ENCODE measurements at regions of chr3 and their contacts with region 1.

Region 1: DNA sequence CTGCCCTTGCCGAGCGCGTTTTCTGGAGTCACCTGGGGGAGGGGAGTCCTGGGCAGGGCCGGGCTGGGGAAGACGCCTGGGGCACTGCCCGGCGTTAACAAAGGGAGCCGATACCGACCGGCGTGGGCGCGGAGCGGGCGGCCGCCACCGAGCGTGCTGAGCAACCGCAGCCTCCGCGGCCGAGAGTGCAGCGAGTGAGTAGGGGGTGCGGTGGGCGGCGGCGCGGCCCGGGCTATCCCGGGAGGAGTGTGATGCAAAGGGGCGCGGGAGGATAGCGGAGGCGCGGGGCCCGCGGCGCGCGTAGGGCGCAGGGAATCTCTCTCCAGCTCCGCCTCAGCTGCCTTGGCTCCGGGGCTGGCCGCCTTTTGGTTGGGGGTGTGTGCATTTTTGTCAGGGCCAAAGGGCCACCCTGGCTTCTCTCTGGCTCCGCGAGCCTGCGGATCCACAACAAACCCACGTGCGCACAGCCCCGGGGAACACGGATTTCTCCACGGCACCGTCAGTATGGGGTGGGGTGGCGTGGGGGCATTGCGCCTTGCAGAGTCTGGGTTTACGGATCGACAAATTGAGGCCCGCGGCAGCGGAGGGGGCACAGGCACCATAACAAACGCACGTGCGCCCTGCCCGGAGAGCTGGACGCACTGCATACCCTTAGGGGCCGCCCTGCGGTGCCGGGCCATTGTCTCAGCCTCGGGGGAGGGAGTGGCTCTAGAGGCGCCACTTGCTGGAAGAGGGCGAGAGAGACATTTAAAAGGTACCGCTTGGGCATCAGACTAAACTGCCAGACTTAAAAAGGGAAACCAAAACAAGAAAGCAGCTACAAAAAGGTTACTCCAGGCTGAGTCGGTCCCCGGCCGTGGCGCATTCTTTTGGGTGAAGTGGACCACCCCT is 560 bp downstream of the ST6GAL1 start:
- DNase-seq: peak; percentile 39 to 78 (median 75)
- ATAC-seq: peak; percentile 87
- H3K4me3 ChIP-seq: peak overlapping the region; percentile 79
- H3K4me3 Mint-ChIP-seq: peak overlapping the region; percentile 89 to 100 (median 98)
- H3K27ac ChIP-seq: peak overlapping the region; percentile 74
- H3K27ac Mint-ChIP-seq: peak overlapping the region; percentile 88 to 98 (median 95)
- H3K4me1 ChIP-seq: peaks cover 8 to 20% of the 10 kb centered on the region in 2 donors
- H3K4me1 Mint-ChIP-seq: peaks cover 30 to 47% (median 40%) of the 10 kb centered on the region in 7 donors
- H3K27me3 ChIP-seq: no peaks in the 10 kb centered on the region
- H3K27me3 Mint-ChIP-seq: no peaks in the 10 kb centered on the region

Region 2: GRCh38 chr3:186617038-186617946 is 313.6 kb before region 1 on chr3:
- CTCF ChIA-PET with region 1: interaction called, 3 read pairs
- POLR2A ChIA-PET with region 1: no interaction called
- intact Hi-C with region 1: loop called in 1 of 2 experiments (anchors 5 kb)
- DNase-seq: peak; percentile 67 to 87 (median 83)
- ATAC-seq: peak; percentile 99
- H3K4me3 ChIP-seq: peak overlapping the region; percentile 23
- H3K4me3 Mint-ChIP-seq: peak overlapping the region; percentile 47 to 81 (median 74)
- H3K27ac ChIP-seq: no peak overlapping the region
- H3K27ac Mint-ChIP-seq: peak overlapping the region in 8 of 9 donors; percentile 51 to 81 (median 62)
- H3K4me1 ChIP-seq: peaks cover 5 to 10% of the 10 kb centered on the region in 2 donors
- H3K4me1 Mint-ChIP-seq: peaks cover 14 to 30% (median 21%) of the 10 kb centered on the region in 7 donors
- H3K27me3 ChIP-seq: no peaks in the 10 kb centered on the region
- H3K27me3 Mint-ChIP-seq: peaks cover 14 to 51% (median 26%) of the 10 kb centered on the region in 5 donors

Region 3: DNA sequence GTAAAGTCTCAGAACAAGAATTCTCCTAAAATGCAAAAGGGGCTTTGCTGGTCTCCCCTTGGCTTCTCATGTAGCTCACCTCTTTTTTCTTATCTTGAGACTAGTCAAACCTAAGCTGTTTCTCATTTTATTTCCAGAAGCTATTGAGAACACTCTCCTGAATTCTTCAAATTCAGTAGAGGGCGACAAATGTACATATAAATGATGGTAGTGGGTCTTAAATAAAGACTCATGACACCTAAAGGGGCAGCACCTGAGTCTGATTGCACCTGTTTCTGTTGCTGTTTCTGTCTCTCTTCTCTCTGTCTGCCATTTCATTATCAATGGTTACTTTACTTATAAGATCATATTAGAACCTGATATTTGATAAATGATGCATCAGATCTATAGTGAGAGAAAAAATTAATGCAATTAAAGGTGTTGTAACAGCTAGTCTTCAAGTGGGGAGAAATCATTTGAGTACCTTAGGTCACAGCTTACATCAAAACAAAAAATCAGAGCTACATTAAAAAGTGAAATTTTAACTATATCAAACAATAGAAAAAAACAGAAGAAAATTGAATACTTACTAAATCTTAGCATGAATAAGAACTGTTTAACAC is 81.4 kb before region 1 on chr3:
- CTCF ChIA-PET with region 1: interaction called, 72 read pairs
- POLR2A ChIA-PET with region 1: interaction called, 62 read pairs
- intact Hi-C with region 1: loop called (anchors 1 kb)
- DNase-seq: peak in 7 of 9 donors; percentile 41 to 77 (median 64)
- ATAC-seq: peak; percentile 90
- H3K4me3 ChIP-seq: no peak overlapping the region
- H3K4me3 Mint-ChIP-seq: no peak overlapping the region
- H3K27ac ChIP-seq: no peak overlapping the region
- H3K27ac Mint-ChIP-seq: peak overlapping the region in 4 of 9 donors; percentile 9 to 68 (median 37)
- H3K4me1 ChIP-seq: peaks cover 0 to 7% of the 10 kb centered on the region in 2 donors
- H3K4me1 Mint-ChIP-seq: peaks cover 14 to 30% (median 18%) of the 10 kb centered on the region in 7 donors
- H3K27me3 ChIP-seq: no peaks in the 10 kb centered on the region
- H3K27me3 Mint-ChIP-seq: peaks cover 0 to 20% (median 11%) of the 10 kb centered on the region in 5 donors

Region 4: GRCh38 chr3:186915806-186916796 is 14.8 kb before region 1 on chr3:
- CTCF ChIA-PET with region 1: interaction called, 9 read pairs
- POLR2A ChIA-PET with region 1: interaction called, 74 read pairs
- intact Hi-C with region 1: no loop called
- DNase-seq: no peak
- ATAC-seq: peak; percentile 36
- H3K4me3 ChIP-seq: peak overlapping the region; percentile 9
- H3K4me3 Mint-ChIP-seq: peak overlapping the region in 7 of 10 donors; percentile 4 to 66 (median 41)
- H3K27ac ChIP-seq: no peak overlapping the region
- H3K27ac Mint-ChIP-seq: peak overlapping the region in 6 of 9 donors; percentile 36 to 81 (median 46)
- H3K4me1 ChIP-seq: peaks cover 9 to 24% of the 10 kb centered on the region in 2 donors
- H3K4me1 Mint-ChIP-seq: peaks cover 22 to 68% (median 56%) of the 10 kb centered on the region in 7 donors
- H3K27me3 ChIP-seq: no peaks in the 10 kb centered on the region
- H3K27me3 Mint-ChIP-seq: peaks cover 0 to 3% (median 0%) of the 10 kb centered on the region in 5 donors

Region 5: DNA sequence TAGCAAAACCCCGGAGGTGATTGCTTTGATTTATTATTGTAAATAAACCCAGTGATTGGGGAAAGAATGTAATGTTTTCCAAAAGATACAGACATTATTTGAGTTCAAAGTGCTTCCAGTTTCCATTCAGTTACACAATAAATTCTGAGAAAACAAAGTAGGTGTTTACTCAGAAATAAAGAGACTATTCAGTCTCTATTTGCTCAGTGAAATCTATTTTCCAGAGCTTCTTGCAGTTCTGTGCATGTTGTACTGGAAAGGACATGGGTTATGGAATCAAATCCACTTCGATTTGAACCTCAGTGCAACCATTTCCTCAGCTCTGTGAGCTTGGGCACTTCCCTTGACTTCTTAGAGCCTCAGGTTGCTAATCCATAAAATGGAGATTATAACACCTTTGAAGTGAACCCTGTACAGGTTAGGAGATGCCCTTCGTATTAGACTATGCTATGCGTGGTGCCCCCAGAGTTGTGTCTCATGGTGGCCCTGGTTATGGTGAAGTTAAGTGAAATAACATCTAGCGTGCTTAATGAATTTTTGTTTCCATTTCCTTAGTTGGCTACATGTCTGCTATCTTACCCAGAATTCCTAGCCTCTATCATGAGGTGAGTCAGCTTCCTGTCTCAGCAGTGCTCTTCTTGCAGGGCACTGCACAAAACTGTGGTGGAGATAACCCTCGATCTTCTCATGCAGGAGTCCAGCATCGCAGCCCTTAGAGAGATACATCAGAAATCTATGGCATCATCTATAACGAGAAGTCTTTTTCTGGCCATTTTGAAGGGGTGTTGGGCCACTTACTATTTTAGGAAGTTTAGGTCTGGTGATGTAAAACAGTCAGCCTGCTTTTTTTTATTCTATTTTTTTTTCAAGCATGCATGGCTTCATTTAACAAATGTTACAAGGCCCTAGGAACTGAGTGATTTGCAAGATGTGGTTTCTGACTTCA is 110.7 kb after region 1 on chr3:
- CTCF ChIA-PET with region 1: interaction called, 6 read pairs
- POLR2A ChIA-PET with region 1: interaction called, 4 read pairs
- intact Hi-C with region 1: loop called (anchors 1 to 2 kb)
- DNase-seq: peak in 8 of 9 donors; percentile 38 to 77 (median 61)
- ATAC-seq: peak; percentile 93
- H3K4me3 ChIP-seq: peak overlapping the region; percentile 12
- H3K4me3 Mint-ChIP-seq: peak overlapping the region; percentile 56 to 88 (median 80)
- H3K27ac ChIP-seq: peak overlapping the region; percentile 67
- H3K27ac Mint-ChIP-seq: peak overlapping the region; percentile 93 to 99 (median 96)
- H3K4me1 ChIP-seq: peaks cover 41 to 79% of the 10 kb centered on the region in 2 donors
- H3K4me1 Mint-ChIP-seq: peaks cover 59 to 95% (median 84%) of the 10 kb centered on the region in 7 donors
- H3K27me3 ChIP-seq: no peaks in the 10 kb centered on the region
- H3K27me3 Mint-ChIP-seq: no peaks in the 10 kb centered on the region

Region 6: DNA sequence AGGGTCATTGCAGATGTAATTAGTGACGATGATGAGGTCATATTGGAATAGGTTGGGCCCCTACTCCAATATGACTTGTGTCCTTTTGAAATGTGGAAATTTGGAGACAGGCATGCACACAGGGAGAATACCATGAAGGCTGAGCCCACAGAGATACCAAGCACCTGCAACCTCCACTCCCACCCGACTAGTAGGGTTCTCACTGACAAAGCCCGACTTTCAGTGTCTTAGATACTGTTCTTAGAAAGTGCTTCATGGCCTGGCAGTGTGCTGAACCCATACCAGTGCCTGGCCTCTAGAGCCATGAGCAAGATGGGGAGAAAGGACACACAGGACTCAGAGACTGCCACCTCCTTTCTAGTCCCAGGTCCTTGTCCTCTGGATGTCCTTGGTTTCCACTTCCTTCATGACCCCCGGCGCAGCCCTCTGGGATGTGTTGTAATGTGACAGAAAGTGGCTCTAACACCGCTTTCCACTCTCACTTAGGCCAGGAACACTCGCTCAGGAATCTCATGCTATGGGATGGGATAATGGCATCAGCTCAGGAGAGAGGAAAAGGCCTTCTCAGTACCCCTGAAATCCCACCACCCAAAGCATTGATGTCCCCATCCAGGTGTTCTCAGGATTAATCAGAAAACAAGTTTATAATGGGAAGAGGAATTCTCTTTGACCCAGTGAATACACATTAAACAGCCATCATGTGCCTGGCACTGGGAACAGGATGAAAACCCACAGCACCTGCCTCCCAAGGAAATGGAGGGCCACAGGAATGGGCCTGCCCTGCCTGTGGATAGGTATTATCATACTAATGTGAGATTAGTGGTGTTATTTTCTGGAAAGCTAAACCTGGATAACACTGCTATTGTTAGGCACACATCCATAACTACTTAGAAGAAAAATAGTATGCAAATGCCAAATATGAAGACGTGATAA is 148.5 kb after region 1 on chr3:
- CTCF ChIA-PET with region 1: no interaction called
- POLR2A ChIA-PET with region 1: no interaction called
- intact Hi-C with region 1: no loop called
- DNase-seq: no peak
- ATAC-seq: no peak
- H3K4me3 ChIP-seq: no peak overlapping the region
- H3K4me3 Mint-ChIP-seq: no peak overlapping the region
- H3K27ac ChIP-seq: peak overlapping the region; percentile 10
- H3K27ac Mint-ChIP-seq: peak overlapping the region in 7 of 9 donors; percentile 9 to 74 (median 39)
- H3K4me1 ChIP-seq: peaks cover 0 to 4% of the 10 kb centered on the region in 2 donors
- H3K4me1 Mint-ChIP-seq: peaks cover 4 to 16% (median 11%) of the 10 kb centered on the region in 7 donors
- H3K27me3 ChIP-seq: no peaks in the 10 kb centered on the region
- H3K27me3 Mint-ChIP-seq: no peaks in the 10 kb centered on the region

Region 7: DNA sequence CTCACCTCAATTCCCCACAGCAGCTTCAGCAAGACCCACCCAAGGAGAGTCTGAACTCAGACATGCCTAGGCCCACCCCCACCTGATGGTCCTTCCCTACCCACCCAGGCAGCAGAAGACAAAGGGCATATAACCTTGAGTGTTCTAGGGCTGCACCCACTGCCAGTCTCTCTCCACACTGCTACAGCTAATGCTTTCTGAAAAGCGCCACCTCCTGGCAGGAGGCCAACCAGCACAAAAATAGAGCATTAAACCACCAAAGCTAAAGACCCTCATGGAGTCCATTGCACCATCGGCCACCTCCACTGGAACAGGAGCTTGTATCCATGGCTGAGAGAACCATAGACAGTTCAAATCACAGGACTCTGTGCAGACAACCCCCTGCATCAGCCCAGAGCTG is 219.7 kb after region 1 on chr3:
- CTCF ChIA-PET with region 1: interaction called, 6 read pairs
- POLR2A ChIA-PET with region 1: no interaction called
- intact Hi-C with region 1: loop called in 1 of 2 experiments (anchors 1 kb)
- DNase-seq: peak; percentile 30 to 57 (median 43)
- ATAC-seq: peak; percentile 60
- H3K4me3 ChIP-seq: no peak overlapping the region
- H3K4me3 Mint-ChIP-seq: no peak overlapping the region
- H3K27ac ChIP-seq: no peak overlapping the region
- H3K27ac Mint-ChIP-seq: peak overlapping the region in 1 of 9 donors; percentile 38
- H3K4me1 ChIP-seq: no peaks in the 10 kb centered on the region
- H3K4me1 Mint-ChIP-seq: peaks cover 0 to 32% (median 10%) of the 10 kb centered on the region in 7 donors
- H3K27me3 ChIP-seq: no peaks in the 10 kb centered on the region
- H3K27me3 Mint-ChIP-seq: peaks cover 0 to 48% (median 0%) of the 10 kb centered on the region in 5 donors

Measured in naive thymus-derived CD4-positive, alpha-beta T cell (primary cell).